Heart right ventricle (tissue), 16 donors: ENCODE measurements at regions of chr10 and their contacts with region 1.

Region 1: GRCh38 chr10:112177247-112177646 is 6.3 kb downstream of the GPAM start:
- DNase-seq: no peak
- ATAC-seq: peak; percentile 38 to 87 (median 75)
- H3K4me3 ChIP-seq: no peak overlapping the region
- H3K27ac ChIP-seq: peak overlapping the region in 7 of 10 donors; percentile 20 to 73 (median 56)
- H3K4me1 ChIP-seq: peaks cover 0 to 26% (median 8%) of the 10 kb centered on the region in 9 donors
- H3K27me3 ChIP-seq: no peaks in the 10 kb centered on the region
- CTCF ChIP-seq: no peak

Region 2: GRCh38 chr10:112307358-112308124 is 130.3 kb after region 1 on chr10:
- intact Hi-C with region 1: loop called in 9 of 10 experiments (anchors 5 to 10 kb)
- DNase-seq: no peak
- ATAC-seq: peak in 5 of 8 donors; percentile 49 to 71 (median 63)
- H3K4me3 ChIP-seq: no peak overlapping the region
- H3K27ac ChIP-seq: no peak overlapping the region
- H3K4me1 ChIP-seq: no peaks in the 10 kb centered on the region
- H3K27me3 ChIP-seq: peaks cover 0 to 8% (median 0%) of the 10 kb centered on the region in 7 donors
- CTCF ChIP-seq: peak; percentile 40 to 76 (median 70)

Region 3: DNA sequence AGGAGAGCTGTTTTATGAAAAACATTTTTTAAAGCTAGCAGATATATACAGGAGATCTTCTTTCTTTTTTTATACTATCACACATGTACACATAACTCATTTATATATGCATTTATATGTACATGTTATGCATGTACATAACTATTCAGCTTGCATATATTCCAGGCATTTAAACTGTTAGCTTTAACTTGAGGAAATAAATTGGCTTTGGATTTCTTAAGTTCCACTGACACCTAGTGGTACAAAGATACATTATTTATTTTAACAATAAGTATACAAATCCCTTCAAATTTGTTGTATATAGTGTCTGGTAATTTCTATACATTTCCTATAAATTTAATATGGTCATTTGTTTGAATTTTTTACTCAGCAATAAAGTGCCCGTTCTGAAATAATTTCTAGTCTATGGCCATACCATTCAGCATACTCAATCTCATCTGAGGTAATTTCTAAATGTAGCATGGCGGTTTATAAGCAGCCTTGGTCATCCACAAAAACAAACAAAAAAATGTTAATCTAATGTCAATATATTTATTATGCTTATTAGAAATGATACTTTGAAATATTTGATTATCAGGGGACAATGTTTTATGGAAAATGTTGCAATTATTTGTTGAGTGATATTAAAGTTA is 257.9 kb after region 1 on chr10:
- intact Hi-C with region 1: loop called in 5 of 10 experiments (anchors 5 to 10 kb)
- DNase-seq: no peak
- ATAC-seq: no peak
- H3K4me3 ChIP-seq: no peak overlapping the region
- H3K27ac ChIP-seq: no peak overlapping the region
- H3K4me1 ChIP-seq: no peaks in the 10 kb centered on the region
- H3K27me3 ChIP-seq: no peaks in the 10 kb centered on the region
- CTCF ChIP-seq: peak in 7 of 9 donors; percentile 38 to 68 (median 52)